Ascending aorta (tissue), 2 donors: ENCODE measurements at regions of chr12 and their contacts with region 1.

Region 1: GRCh38 chr12:71840231-71840847 is 780 bp downstream of the TBC1D15 start:
- DNase-seq: no peak
- H3K4me3 ChIP-seq: peak overlapping the region; percentile 73 to 78
- H3K27ac ChIP-seq: peak overlapping the region; percentile 93 to 96
- H3K4me1 ChIP-seq: peaks cover 0 to 7% of the 10 kb centered on the region in 2 donors
- H3K27me3 ChIP-seq: no peaks in the 10 kb centered on the region
- CTCF ChIP-seq: no peak

Region 2: GRCh38 chr12:71663561-71664294 is 176.6 kb before region 1 on chr12 and contains the start of gene ZFC3H1:
- intact Hi-C with region 1: loop called (anchors 2 kb)
- DNase-seq: peak; percentile 92 to 97
- H3K4me3 ChIP-seq: peak within 1 kb of the TSS; percentile 91 to 95
- H3K27ac ChIP-seq: peak within 1 kb of the TSS; percentile 96 to 98
- H3K4me1 ChIP-seq: peaks cover 0 to 17% of the 10 kb centered on the region in 2 donors
- H3K27me3 ChIP-seq: no peaks in the 10 kb centered on the region
- CTCF ChIP-seq: peak in 2 of 3 experiments; percentile 24 to 32
- total RNA-seq, gene ZFC3H1: 15.8 TPM

Region 3: DNA sequence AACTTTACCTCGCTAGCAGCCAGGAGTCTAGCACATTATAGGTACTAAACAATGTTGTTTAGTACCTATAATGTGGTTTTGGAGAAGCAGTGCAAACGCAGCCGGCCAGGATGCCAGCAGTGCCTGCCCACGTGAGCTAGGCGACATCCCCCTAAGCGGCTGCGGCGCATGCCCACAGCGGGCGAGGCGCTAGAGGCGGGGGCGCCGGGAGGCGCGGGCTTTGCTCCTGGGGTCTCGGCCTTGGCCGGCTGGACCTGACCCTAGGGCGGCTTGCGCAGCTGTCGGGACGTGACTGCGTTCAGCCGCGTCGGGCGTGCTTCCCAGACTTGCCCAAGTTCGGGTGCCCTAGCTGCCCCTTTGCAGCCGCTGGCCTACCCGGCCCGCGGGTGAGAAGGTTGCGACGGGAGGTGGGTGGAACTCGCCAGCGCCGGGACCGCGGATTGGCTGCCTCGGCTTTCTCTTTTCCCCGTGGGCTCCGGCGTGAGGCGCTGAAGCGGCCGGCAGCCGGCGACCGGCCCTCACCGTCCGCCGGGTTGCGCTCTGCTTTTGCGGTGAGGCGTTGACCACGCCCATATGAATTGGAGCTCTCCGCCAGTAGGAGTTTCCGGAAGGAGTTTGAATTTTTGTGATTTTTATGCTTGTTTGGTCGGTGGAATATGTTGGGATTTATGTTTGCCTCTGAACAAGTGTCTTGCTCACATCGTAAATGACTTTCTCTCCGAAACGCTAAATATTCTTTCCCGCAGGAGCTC is 154.2 kb before region 1 on chr12 and contains the start of gene TMEM19:
- intact Hi-C with region 1: loop called (anchors 5 kb)
- DNase-seq: peak; percentile 69 to 93
- H3K4me3 ChIP-seq: peak within 1 kb of the TSS; percentile 68 to 92
- H3K27ac ChIP-seq: peak within 1 kb of the TSS; percentile 73 to 81
- H3K4me1 ChIP-seq: peaks cover 0 to 10% of the 10 kb centered on the region in 2 donors
- H3K27me3 ChIP-seq: no peaks in the 10 kb centered on the region
- CTCF ChIP-seq: peak in 1 of 3 experiments; percentile 38
- total RNA-seq, gene TMEM19: 14.5 TPM

Region 4: DNA sequence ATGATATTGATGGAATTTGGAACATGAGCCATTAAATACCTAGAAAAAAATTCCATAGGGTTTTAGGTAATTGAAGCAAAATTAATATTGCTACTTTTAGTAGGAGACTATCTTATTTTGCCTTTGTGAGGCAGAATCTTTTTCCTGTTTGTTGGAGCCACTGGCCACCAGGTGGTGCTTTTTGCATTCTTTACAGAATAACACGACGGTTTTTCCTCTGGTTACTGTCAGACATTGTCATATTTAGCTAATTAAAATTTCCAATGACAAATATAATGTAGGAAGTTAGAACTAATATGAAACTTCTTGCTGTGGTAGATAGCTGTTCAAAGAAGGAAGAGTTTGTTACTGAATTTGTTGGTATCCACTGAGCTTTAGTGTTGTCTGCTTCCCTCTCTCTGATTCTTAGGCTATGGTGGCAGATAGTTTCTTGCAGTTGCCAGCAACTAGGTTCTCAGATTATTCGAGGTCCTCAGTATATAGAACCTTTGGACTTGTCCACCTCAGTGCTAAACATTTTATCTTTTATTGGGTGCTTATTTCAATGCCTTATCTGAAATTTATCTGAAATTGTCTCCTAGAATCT is 60.0 kb before region 1 on chr12:
- intact Hi-C with region 1: loop called (anchors 5 kb)
- DNase-seq: no peak
- H3K4me3 ChIP-seq: no peak overlapping the region
- H3K27ac ChIP-seq: no peak overlapping the region
- H3K4me1 ChIP-seq: no peaks in the 10 kb centered on the region
- H3K27me3 ChIP-seq: no peaks in the 10 kb centered on the region
- CTCF ChIP-seq: peak; percentile 24 to 64 (median 45)

Region 5: GRCh38 chr12:71900091-71900490 is 59.8 kb after region 1 on chr12:
- intact Hi-C with region 1: no loop called
- DNase-seq: no peak
- H3K4me3 ChIP-seq: no peak overlapping the region
- H3K27ac ChIP-seq: no peak overlapping the region
- H3K4me1 ChIP-seq: no peaks in the 10 kb centered on the region
- H3K27me3 ChIP-seq: no peaks in the 10 kb centered on the region
- CTCF ChIP-seq: peak in 1 of 3 experiments; percentile 17